T-cell (primary cell): ENCODE measurements at regions of chr10 and their contacts with region 1.

Region 1: DNA sequence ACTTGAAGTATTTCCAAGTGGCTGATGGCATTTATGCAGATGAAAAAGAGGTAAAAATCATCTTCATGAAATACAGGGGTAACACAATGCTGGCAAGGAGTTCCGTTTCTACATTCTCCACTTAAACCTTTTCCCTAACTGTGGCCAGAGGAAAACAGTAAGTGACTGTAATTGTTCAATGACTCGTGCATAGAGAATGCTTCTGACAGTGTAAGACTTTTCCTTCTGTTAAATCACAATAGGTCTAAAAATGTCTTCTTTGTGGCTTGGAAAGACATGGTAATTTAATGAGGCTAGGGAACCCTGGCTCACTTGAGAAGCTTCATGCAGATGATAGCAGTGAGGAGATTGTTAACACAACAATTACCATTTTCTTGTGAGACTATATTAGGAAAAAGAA is 50.3 kb upstream of the RSU1 start:
- DNase-seq: no peak
- ATAC-seq: no peak
- H3K4me3 ChIP-seq: no peak overlapping the region
- H3K4me3 Mint-ChIP-seq: no peak overlapping the region
- H3K27ac ChIP-seq: no peak overlapping the region
- H3K27ac Mint-ChIP-seq: no peak overlapping the region
- H3K4me1 ChIP-seq: no peaks in the 10 kb centered on the region
- H3K4me1 Mint-ChIP-seq: no peaks in the 10 kb centered on the region
- H3K27me3 ChIP-seq: no peaks in the 10 kb centered on the region
- H3K27me3 Mint-ChIP-seq: no peaks in the 10 kb centered on the region

Region 2: GRCh38 chr10:16756561-16757222 is 110.9 kb before region 1 on chr10:
- CTCF ChIA-PET with region 1: no interaction called
- POLR2A ChIA-PET with region 1: no interaction called
- DNase-seq: no peak
- ATAC-seq: no peak
- H3K4me3 ChIP-seq: no peak overlapping the region
- H3K4me3 Mint-ChIP-seq: no peak overlapping the region
- H3K27ac ChIP-seq: no peak overlapping the region
- H3K27ac Mint-ChIP-seq: no peak overlapping the region
- H3K4me1 ChIP-seq: no peaks in the 10 kb centered on the region
- H3K4me1 Mint-ChIP-seq: peaks cover 0 to 3% (median 2%) of the 10 kb centered on the region in 3 donors
- H3K27me3 ChIP-seq: no peaks in the 10 kb centered on the region
- H3K27me3 Mint-ChIP-seq: no peaks in the 10 kb centered on the region

Region 3: GRCh38 chr10:16945593-16945992 is 78.0 kb after region 1 on chr10:
- CTCF ChIA-PET with region 1: no interaction called
- POLR2A ChIA-PET with region 1: interaction called in 1 of 2 experiments, 10 read pairs
- DNase-seq: no peak
- ATAC-seq: no peak
- H3K4me3 ChIP-seq: no peak overlapping the region
- H3K4me3 Mint-ChIP-seq: no peak overlapping the region
- H3K27ac ChIP-seq: no peak overlapping the region
- H3K27ac Mint-ChIP-seq: no peak overlapping the region
- H3K4me1 ChIP-seq: peaks cover 0 to 3% of the 10 kb centered on the region in 2 experiments
- H3K4me1 Mint-ChIP-seq: peaks cover 0 to 20% (median 17%) of the 10 kb centered on the region in 3 donors
- H3K27me3 ChIP-seq: no peaks in the 10 kb centered on the region
- H3K27me3 Mint-ChIP-seq: no peaks in the 10 kb centered on the region